Tibial artery (tissue), 4 donors: ENCODE measurements at regions of chr5 and their contacts with region 1.

Region 1: DNA sequence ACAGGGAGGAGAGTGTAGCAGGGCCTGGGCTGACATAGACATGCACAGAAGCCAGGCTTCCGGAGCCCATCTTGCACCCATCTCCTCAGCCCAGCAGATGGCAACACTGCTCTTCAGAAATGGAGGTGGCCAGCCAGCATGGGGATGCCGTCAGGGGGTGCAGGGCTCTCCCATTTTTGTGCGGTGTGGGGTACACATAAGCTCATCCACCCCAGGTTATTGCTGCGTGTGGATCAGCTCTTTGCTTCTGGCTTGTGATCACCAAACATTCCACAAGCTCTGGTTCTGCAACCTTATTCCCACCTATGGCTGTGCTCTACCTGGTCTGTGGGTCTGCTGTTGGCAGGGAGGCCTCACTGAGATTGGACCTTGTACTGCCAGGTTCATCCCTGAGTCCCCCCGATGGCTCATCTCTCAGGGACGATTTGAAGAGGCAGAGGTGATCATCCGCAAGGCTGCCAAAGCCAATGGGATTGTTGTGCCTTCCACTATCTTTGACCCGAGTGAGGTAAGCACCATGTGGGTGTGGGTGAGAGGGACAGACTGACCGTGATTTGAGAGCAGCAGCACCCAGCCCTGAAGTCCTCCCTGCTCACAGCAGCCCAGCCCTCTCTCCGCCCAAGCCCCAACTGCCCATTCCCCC is 17.3 kb downstream of the SLC22A5 start:
- DNase-seq: peak; percentile 74 to 83
- H3K4me3 ChIP-seq: no peak overlapping the region
- H3K27ac ChIP-seq: peak overlapping the region; percentile 73 to 82
- H3K4me1 ChIP-seq: peaks cover 12 to 51% (median 45%) of the 10 kb centered on the region in 4 donors
- H3K27me3 ChIP-seq: no peaks in the 10 kb centered on the region
- CTCF ChIP-seq: peak; percentile 74 to 81

Region 2: DNA sequence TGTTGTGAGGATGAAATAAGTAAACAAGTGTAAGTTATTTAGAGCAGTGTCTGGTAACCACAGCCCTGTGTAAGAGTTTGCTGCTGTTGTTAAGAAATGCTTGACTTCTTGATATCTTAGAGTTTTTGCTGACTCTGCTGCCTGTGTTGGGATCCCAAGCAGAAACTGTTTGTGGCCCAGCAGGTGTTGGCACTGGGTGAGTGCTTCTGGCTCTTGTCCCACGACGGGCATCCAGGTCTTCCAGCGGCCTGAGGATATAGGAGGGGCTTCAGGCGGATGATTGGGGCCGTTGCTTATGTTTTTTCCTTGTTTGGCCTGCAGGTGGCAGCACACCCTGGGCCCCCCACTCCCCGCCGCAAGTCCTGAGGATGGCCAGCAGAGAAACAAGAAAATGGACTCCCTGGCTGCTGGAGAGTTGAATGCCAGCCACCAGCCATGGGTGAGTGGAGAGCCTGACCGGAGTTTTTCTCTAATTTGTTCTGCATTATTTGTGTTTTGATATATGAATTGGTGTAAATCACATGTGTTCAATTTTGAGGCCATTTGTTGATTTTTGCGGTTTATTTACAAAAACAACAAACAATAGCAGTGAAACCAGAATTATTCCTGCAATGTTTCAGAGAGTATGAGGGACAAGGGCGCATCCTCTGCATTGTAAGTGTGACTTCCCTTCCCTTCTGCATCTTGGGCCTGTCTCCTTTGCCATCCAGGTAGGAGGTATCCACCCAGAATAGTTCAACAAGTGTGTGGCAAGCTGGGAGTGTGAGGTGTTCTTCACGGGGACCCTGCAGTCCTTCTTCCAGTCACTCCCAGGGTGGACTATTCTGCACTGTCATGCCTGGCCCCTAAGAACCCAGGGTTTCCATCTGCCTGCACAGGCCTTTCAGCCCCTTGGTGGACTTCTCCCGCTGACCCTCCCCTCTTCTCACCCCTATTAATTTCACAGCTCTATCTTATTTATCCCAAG is 33.0 kb after region 1 on chr5:
- intact Hi-C with region 1: loop called (anchors 5 kb)
- DNase-seq: peak; percentile 66 to 81
- H3K4me3 ChIP-seq: no peak overlapping the region
- H3K27ac ChIP-seq: peak overlapping the region; percentile 72 to 73
- H3K4me1 ChIP-seq: peaks cover 0 to 98% (median 77%) of the 10 kb centered on the region in 4 donors
- H3K27me3 ChIP-seq: no peaks in the 10 kb centered on the region
- CTCF ChIP-seq: peak; percentile 81 to 85

Region 3: DNA sequence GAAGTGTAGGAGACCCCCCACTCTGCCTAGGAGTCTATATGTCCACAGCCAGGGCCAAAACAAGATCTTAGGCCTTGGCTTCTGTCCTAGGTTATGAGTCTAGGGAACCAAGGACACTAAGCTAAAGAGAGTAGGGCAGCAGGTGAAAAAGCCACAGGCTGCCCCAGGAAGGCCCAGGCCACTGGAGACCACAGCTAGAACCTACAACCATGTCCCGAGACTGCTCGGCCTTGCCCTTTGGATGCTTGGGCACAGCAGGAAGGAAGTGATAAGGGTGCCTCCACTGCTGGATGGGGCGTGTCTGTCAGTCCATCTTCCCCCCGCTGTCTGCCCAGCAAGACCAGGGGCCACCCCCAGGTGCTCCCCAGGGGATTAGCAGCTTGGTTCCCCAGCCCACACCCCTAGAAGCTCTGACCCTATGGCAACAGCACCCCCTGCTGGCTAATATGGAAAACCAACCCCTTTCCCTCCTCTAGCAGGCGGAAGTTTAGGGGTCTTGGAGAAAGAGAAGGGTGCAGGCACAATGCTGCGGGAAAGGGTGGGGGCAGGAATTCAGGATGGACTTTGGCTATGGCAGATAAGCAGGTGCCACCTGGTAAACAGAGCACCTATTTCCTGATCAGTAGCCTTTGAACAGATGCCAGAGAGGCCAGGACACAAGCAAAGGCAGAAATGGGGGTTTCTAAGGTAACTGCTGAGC is 114.3 kb after region 1 on chr5:
- intact Hi-C with region 1: loop called (anchors 2 kb)
- DNase-seq: peak in 1 of 2 donors; percentile 73
- H3K4me3 ChIP-seq: no peak overlapping the region
- H3K27ac ChIP-seq: peak overlapping the region; percentile 9 to 28
- H3K4me1 ChIP-seq: peaks cover 0 to 35% (median 31%) of the 10 kb centered on the region in 4 donors
- H3K27me3 ChIP-seq: no peaks in the 10 kb centered on the region
- CTCF ChIP-seq: peak; percentile 79 to 87